Panc1 (cell line): ENCODE measurements at regions of chr12 and their contacts with region 1.

Region 1: DNA sequence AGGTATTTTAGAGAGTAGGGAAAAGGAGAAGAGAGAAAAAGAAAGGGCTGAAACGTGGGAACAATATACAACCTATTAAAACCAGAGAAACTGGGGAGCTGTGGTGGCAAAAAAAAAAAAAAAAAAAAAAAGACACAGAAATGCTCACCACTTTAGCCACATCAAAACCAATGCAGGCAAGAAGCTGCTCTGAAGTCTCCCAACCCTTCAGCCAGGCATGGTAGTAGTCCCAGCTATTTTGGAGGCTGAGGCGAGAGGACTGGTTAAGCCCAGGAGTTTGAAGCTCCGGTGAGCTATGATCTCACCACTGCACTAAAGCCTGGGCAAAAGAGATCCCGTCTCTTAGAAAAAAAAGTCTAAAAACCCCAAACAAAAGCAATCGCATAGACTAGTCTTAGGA is 33.2 kb downstream of the DENND5B start:
- DNase-seq: no peak
- ATAC-seq: no peak
- H3K4me3 ChIP-seq: no peak overlapping the region
- H3K27ac ChIP-seq: no peak overlapping the region
- H3K4me1 ChIP-seq: no peaks in the 10 kb centered on the region
- H3K27me3 ChIP-seq: no peaks in the 10 kb centered on the region
- CTCF ChIP-seq: no peak

Region 2: DNA sequence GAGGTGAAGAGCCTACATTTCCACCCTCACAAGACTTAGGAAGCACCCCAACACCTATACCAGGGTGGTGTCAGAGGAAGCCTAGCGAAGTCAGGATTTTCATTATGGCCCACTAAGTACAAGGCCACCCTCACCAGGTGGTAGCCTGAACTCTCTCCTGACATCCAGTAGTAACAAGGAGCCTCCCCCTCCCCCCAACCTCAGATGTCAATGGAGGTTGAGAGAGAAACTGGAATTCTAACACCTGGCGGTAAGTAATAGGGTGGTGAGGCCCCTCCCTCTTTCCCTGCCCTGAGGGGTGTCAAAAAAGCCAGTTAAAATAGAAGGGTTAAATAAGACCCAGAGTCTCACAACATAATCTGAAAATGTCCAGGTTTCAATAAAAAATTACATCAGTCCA is 269.3 kb before region 1 on chr12:
- CTCF ChIA-PET with region 1: no interaction called
- POLR2A ChIA-PET with region 1: no interaction called
- in situ Hi-C with region 1: no loop called
- intact Hi-C with region 1: no loop called
- DNase-seq: no peak
- ATAC-seq: no peak
- H3K4me3 ChIP-seq: no peak overlapping the region
- H3K27ac ChIP-seq: no peak overlapping the region
- H3K4me1 ChIP-seq: no peaks in the 10 kb centered on the region
- H3K27me3 ChIP-seq: no peaks in the 10 kb centered on the region
- CTCF ChIP-seq: no peak

Region 3: DNA sequence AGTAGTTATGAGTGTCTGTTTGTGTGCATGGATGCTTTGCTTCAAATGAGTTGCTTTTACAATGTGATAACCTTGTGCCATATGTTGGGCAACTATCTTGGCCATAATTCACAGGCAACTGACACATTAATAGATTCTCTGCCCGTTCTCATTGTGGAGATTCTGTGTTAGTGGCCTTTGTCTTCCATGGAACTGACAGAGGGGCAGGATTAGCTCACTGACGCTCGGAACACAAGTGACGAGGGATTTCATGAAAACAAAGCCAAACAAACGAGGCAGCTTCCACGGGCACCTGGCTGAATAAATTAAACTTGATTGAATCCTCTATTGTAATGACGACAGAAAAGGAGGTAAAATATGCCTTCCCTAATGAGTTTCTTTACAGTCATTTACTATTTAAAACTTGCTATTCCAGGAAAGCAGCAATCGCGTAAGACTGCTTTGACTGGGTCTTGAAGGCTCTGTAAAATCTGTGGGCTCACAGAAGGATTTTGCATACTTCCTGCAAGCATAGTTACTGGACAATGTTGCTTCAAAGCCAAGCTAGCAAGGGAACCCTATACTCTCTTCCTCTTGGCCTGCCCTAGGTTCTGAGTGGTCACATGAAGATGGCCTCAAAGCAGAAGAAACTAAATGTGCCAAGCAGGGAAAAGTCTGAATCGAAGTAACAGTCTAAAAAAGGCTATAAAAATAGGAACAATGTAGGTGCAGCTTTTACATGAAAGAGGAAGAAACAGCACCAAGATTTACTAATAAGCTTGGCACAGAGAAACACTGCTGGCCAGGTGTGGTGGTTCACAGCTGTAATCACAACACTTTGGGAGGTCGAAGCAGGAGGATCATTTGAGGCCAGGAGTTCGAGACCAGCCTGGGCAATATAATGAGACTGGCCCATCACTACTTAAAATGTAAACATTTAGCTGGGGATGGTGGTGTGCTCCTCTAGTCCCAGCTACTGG is 203.7 kb before region 1 on chr12:
- CTCF ChIA-PET with region 1: no interaction called
- POLR2A ChIA-PET with region 1: no interaction called
- in situ Hi-C with region 1: no loop called
- intact Hi-C with region 1: no loop called
- DNase-seq: no peak
- ATAC-seq: no peak
- H3K4me3 ChIP-seq: no peak overlapping the region
- H3K27ac ChIP-seq: no peak overlapping the region
- H3K4me1 ChIP-seq: no peaks in the 10 kb centered on the region
- H3K27me3 ChIP-seq: no peaks in the 10 kb centered on the region
- CTCF ChIP-seq: no peak

Region 4: GRCh38 chr12:31477687-31478086 is 80.0 kb before region 1 on chr12:
- CTCF ChIA-PET with region 1: no interaction called
- POLR2A ChIA-PET with region 1: no interaction called
- in situ Hi-C with region 1: no loop called
- intact Hi-C with region 1: no loop called
- DNase-seq: no peak
- ATAC-seq: no peak
- H3K4me3 ChIP-seq: no peak overlapping the region
- H3K27ac ChIP-seq: no peak overlapping the region
- H3K4me1 ChIP-seq: no peaks in the 10 kb centered on the region
- H3K27me3 ChIP-seq: no peaks in the 10 kb centered on the region
- CTCF ChIP-seq: no peak

Region 5: GRCh38 chr12:31519511-31519910 is 38.2 kb before region 1 on chr12:
- CTCF ChIA-PET with region 1: no interaction called
- POLR2A ChIA-PET with region 1: interaction called, 18 read pairs
- in situ Hi-C with region 1: no loop called
- intact Hi-C with region 1: no loop called
- DNase-seq: no peak
- ATAC-seq: no peak
- H3K4me3 ChIP-seq: no peak overlapping the region
- H3K27ac ChIP-seq: peak overlapping the region; percentile 60
- H3K4me1 ChIP-seq: peaks cover 36% of the 10 kb centered on the region
- H3K27me3 ChIP-seq: no peaks in the 10 kb centered on the region
- CTCF ChIP-seq: no peak